ENCODE measurements at regions of chr7 and their contacts with region 1.

Region 1: GRCh38 chr7:101386558-101387231 is 24.0 kb downstream of the COL26A1 start:
- DNase-seq: no peak

Region 2: GRCh38 chr7:100065452-100066186 is 1321.1 kb before region 1 on chr7:
- intact Hi-C with region 1: loop called in 1 of 2 experiments (anchors 10 kb)
- DNase-seq: no peak

Measured in posterior vena cava (tissue), 2 donors.